ENCODE measurements at regions of chr11 and their contacts with region 1.

Region 1: DNA sequence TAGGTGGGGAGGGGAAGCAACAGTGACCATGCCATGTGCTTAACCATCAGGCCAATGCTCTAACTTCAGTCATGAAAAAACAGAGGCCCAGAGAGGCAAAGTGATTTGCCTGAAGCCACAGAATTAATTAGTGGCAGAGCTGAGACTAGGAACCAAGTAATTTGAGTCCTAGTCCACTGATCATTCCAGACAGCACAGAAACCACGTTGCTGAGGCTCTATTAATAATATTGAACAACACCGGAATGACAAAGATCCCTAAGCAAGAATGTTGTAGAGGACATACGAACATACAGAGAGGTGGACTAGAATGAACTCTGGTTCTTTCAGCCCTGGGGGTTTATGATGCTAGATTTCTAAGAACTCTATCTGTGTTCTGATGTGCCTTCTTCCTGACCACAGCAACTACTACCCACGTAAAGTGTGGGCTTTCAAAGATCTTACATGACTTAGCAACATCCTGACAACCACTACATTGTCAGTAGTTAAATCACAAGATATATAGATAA is 92.3 kb downstream of the GAB2 start:
- DNase-seq: no peak
- ATAC-seq: no peak
- H3K4me3 ChIP-seq: no peak overlapping the region
- H3K27ac ChIP-seq: no peak overlapping the region
- H3K4me1 ChIP-seq: no peaks in the 10 kb centered on the region
- H3K27me3 ChIP-seq: no peaks in the 10 kb centered on the region
- CTCF ChIP-seq: no peak

Region 2: GRCh38 chr11:78109081-78110015 is 216.0 kb before region 1 on chr11:
- CTCF ChIA-PET with region 1: no interaction called
- POLR2A ChIA-PET with region 1: no interaction called
- intact Hi-C with region 1: no loop called
- DNase-seq: no peak
- ATAC-seq: no peak
- H3K4me3 ChIP-seq: no peak overlapping the region
- H3K27ac ChIP-seq: no peak overlapping the region
- H3K4me1 ChIP-seq: no peaks in the 10 kb centered on the region
- H3K27me3 ChIP-seq: no peaks in the 10 kb centered on the region
- CTCF ChIP-seq: no peak

Region 3: DNA sequence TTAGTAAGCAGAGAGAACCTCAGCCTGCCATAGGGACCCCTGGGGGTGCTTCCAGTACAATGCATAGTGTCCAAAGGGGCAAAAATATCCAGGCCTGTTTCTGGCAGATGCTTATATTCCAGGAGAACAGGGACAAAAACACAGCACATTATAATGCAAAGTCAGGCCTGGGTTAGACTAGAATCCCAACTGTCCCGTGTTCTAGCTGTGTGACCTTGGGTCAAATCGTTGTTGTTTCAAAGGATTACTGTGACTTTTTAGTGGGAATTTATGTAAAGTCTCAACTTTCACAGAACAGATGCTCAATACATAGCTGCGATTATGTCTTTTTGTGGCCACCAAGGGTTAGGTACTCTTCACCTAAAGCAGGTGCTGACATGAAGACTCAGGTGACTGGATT is 50.6 kb before region 1 on chr11:
- CTCF ChIA-PET with region 1: no interaction called
- POLR2A ChIA-PET with region 1: interaction called, 29 read pairs
- intact Hi-C with region 1: no loop called
- DNase-seq: no peak
- ATAC-seq: no peak
- H3K4me3 ChIP-seq: no peak overlapping the region
- H3K27ac ChIP-seq: no peak overlapping the region
- H3K4me1 ChIP-seq: no peaks in the 10 kb centered on the region
- H3K27me3 ChIP-seq: no peaks in the 10 kb centered on the region
- CTCF ChIP-seq: no peak

Region 4: GRCh38 chr11:78354408-78355308 is 29.3 kb after region 1 on chr11:
- CTCF ChIA-PET with region 1: no interaction called
- POLR2A ChIA-PET with region 1: interaction called, 18 read pairs
- intact Hi-C with region 1: no loop called
- DNase-seq: no peak
- ATAC-seq: no peak
- H3K4me3 ChIP-seq: no peak overlapping the region
- H3K27ac ChIP-seq: no peak overlapping the region
- H3K4me1 ChIP-seq: no peaks in the 10 kb centered on the region
- H3K27me3 ChIP-seq: no peaks in the 10 kb centered on the region
- CTCF ChIP-seq: no peak